Lower leg skin (tissue), 4 donors: ENCODE measurements at regions of chr12 and their contacts with region 1.

Region 1: DNA sequence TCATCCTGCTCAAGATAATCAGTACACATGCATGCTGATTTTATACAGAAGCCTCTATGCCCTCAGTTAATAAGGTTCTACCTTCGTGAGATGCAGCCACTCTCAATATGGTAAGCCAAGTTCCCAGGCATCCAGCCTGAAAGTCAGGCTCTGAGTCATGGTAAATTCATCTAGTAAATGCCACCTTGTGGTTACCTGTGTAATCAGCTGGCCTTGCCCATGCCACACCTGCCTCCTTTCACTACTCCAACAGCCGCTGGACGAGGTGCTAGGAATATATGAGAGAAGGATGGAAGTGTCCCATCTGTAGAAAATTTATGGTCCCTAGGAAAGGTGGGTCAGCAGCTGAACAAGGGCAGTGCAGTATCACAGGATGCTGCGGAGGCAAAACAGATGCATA is 207.3 kb downstream of the SSPN start:
- DNase-seq: peak in 1 of 2 donors; percentile 42
- H3K4me3 ChIP-seq: no peak overlapping the region
- CTCF ChIP-seq: no peak
- POLR2A ChIP-seq: no peak

Region 2: GRCh38 chr12:26097046-26097878 is 305.4 kb before region 1 on chr12:
- intact Hi-C with region 1: loop called (anchors 10 kb)
- DNase-seq: peak; percentile 59 to 88
- H3K4me3 ChIP-seq: no peak overlapping the region
- CTCF ChIP-seq: no peak
- POLR2A ChIP-seq: no peak

Region 3: GRCh38 chr12:26327975-26328644 is 74.5 kb before region 1 on chr12:
- intact Hi-C with region 1: no loop called
- DNase-seq: no peak
- H3K4me3 ChIP-seq: no peak overlapping the region
- CTCF ChIP-seq: no peak
- POLR2A ChIP-seq: no peak